ENCODE measurements at regions of chr7 and their contacts with region 1.

Region 1: DNA sequence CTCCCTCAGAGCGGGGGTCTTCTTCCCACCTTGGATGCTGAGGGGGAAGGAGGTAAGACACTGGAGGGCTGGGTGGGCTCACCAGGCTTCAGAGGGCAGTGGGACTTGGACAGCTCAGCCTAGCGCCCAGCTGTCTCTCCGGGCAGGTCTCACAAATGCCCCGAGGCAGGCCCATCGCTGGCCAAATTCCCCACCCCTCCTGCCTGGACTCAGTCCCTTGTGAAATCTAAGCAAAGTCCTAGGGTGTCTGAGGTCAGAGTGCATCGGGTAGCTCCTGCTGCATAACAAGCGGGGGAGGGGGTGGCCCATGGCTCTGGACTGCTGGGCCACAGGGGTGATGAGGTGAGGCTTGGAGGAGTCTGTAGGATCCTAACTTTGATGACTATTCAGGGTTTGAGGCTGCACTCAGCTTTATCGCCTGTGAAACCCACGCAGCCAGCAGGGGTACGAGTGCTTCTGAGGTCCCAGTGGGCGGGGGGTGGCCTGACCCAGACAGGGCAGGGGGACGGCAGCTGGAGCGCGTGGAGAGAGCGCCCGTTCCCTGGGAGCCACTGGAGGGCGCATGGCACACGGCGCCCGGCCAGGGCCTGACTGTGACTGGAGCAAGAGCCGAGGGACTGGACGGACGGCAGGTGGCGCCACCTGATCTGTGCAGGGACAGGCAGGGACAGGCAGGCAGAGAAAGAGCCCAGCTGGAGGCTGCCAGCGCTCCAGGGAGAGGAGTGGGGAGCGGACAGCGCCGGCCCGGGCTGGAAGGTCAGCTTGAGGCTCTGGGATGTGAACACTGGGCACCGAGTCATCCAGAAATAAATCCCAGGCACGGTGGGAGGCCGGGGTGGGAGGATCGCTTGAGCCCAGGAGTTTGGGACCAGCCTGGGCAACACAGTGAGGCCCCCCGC is 10.0 kb downstream of the CYP2W1 start:
- DNase-seq: peak; percentile 98
- H3K4me3 ChIP-seq: peak overlapping the region in 1 of 2 experiments; percentile 24; a peak in 1 of 4 replicates
- H3K27ac ChIP-seq: no peak overlapping the region
- H3K4me1 ChIP-seq: peaks cover 3 to 7% of the 10 kb centered on the region in 2 experiments; a peak in 2 of 4 replicates
- H3K27me3 ChIP-seq: no peaks in the 10 kb centered on the region
- CTCF ChIP-seq: peak; percentile 100
- EP300 ChIP-seq: 0 out of 4 replicates have a peak, but pooled peaks of 1 of the 2 experiments have one; percentile 17
- RAD21 ChIP-seq: peak; percentile 100

Region 2: GRCh38 chr7:851204-851603 is 141.8 kb before region 1 on chr7:
- CTCF ChIA-PET with region 1: no interaction called
- POLR2A ChIA-PET with region 1: no interaction called
- DNase-seq: no peak
- H3K4me3 ChIP-seq: no peak overlapping the region
- H3K27ac ChIP-seq: no peak overlapping the region
- H3K4me1 ChIP-seq: no peaks in the 10 kb centered on the region
- H3K27me3 ChIP-seq: no peaks in the 10 kb centered on the region
- CTCF ChIP-seq: no peak
- EP300 ChIP-seq: no peak
- RAD21 ChIP-seq: no peak

Region 3: GRCh38 chr7:974820-975681 is 17.9 kb before region 1 on chr7 and contains the start of gene COX19:
- CTCF ChIA-PET with region 1: interaction called, 134 read pairs
- POLR2A ChIA-PET with region 1: no interaction called
- DNase-seq: peak; percentile 100
- H3K4me3 ChIP-seq: peak within 1 kb of the TSS; percentile 75 to 83
- H3K27ac ChIP-seq: peak within 1 kb of the TSS; percentile 79 to 91
- H3K4me1 ChIP-seq: peaks cover 6 to 12% of the 10 kb centered on the region in 2 experiments; a peak in 2 of 4 replicates
- H3K27me3 ChIP-seq: no peaks in the 10 kb centered on the region
- CTCF ChIP-seq: no peak
- EP300 ChIP-seq: no peak
- RAD21 ChIP-seq: no peak
- polyA plus RNA-seq, gene COX19: 7.6 TPM in 2 replicates

Region 4: DNA sequence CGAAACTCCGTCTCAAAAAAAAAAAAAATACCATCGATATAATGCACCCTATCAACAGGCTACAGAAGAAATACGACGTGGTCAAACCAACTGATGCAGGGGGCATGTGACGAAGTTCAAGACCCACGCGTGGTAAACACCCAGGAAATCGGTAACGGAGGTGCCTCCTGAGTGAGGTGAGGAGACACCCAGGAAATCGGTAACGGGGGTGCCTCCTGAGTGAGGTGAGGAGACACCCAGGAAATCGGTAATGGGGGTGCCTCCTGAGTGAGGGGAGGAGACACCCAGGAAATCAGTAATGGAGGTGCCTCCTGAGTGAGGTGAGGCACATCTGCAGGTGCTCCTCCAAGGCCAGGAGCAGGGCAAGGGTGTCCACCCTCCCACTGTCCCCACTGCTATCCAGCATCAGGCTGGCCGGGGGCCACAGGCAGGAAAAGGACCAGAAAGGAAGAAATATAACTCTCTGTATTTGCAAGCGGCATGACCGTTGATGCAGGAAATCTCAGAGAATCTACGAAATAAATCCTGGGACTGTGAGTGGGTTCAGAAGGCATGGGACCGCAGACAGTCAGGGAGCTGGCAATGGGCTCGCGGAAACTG is 40.7 kb after region 1 on chr7:
- CTCF ChIA-PET with region 1: interaction called, 101 read pairs
- POLR2A ChIA-PET with region 1: no interaction called
- DNase-seq: no peak
- H3K4me3 ChIP-seq: no peak overlapping the region
- H3K27ac ChIP-seq: no peak overlapping the region
- H3K4me1 ChIP-seq: peaks cover 6 to 8% of the 10 kb centered on the region in 2 experiments; a peak in 3 of 4 replicates
- H3K27me3 ChIP-seq: no peaks in the 10 kb centered on the region
- CTCF ChIP-seq: no peak
- EP300 ChIP-seq: no peak
- RAD21 ChIP-seq: no peak

Region 5: GRCh38 chr7:1096156-1097119 is 103.5 kb after region 1 on chr7:
- CTCF ChIA-PET with region 1: interaction called, 114 read pairs
- POLR2A ChIA-PET with region 1: no interaction called
- DNase-seq: peak; percentile 88
- H3K4me3 ChIP-seq: no peak overlapping the region; a peak in 1 of 4 replicates
- H3K27ac ChIP-seq: peak overlapping the region in 1 of 2 experiments; percentile 71; a peak in 2 of 4 replicates
- H3K4me1 ChIP-seq: peaks cover 12 to 44% of the 10 kb centered on the region in 2 experiments; a peak in 3 of 4 replicates
- H3K27me3 ChIP-seq: no peaks in the 10 kb centered on the region
- CTCF ChIP-seq: no peak
- EP300 ChIP-seq: no peak
- RAD21 ChIP-seq: no peak

Region 6: DNA sequence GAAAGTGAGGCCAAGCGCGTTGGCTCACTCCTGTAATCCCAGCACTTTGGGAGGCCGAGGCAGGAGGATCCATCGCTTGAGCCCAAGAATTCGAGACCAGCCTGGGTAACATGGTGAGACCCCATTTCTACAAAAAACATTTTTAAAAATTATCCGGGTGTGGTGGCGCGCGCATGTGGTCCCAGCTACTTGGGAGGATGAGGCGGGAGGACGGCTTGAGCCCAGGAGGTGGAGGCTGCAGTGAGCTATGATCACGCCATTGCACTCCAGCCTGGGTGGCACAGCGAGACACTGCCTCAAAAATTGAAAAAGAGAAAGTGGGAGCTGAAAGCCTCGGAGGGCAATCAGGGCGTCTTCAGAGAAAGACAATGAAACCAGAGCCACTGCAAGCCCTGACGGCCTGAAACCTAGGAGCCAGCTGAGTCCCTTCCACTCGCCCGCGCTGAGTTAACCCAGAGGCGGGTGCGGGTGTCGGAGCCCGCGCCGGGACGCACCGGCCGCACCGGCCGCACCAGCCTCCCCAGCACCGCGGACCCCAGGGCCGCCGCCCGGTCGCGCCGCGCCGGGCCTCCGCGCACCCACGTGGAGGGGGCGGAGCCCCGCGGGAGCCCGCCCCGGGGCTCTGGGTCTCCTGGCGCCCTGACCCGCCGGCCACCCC is 144.7 kb after region 1 on chr7:
- CTCF ChIA-PET with region 1: interaction called, 327 read pairs
- POLR2A ChIA-PET with region 1: interaction called, 8 read pairs
- DNase-seq: no peak
- H3K4me3 ChIP-seq: peak overlapping the region; percentile 68 to 90
- H3K27ac ChIP-seq: peak overlapping the region; percentile 1 to 70; a peak in 2 of 4 replicates
- H3K4me1 ChIP-seq: peaks cover 4 to 19% of the 10 kb centered on the region in 2 experiments; a peak in 2 of 4 replicates
- H3K27me3 ChIP-seq: no peaks in the 10 kb centered on the region
- CTCF ChIP-seq: no peak
- EP300 ChIP-seq: no peak
- RAD21 ChIP-seq: no peak

Region 7: DNA sequence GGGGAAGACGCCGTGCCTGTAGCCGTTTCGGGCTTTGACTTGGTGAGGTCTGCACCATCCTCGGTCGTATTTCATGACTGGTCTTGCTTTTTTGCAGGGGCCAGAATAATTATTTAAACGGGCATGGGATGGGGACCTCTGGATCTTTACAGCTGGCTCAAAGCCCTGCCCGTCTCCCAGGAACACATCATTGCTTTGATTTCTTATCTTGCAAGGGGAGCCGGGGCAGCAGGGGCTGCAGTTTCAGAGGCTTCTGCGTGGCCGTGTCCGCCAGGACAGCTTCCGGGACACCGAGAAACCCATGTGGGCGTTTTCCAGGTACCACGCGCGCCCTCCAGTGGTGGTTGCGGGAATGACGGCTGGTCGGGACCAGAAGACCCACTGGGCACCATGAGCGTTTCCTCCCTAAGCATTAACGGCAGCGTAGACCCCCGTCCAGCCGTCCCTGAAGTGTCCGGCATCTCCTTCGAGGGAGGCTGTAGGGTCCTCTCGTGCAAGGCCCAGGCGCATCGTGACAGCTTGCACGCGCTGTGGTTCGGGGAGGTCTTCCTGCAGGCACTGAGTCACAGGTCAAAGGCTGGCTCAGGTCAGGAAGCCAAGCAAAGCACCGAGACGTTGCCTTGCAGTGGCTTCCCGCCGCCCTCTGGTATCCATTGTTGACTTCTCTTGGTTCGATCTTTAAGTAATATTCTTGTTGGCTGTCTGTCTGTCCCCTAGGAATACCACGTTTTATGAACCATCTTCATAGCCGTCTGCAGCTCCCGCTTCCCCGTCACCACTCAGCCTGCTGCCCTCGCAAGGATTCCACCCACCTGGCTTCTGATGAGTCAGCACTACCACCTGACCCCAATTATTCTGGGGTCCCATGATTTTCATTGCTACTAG is 183.3 kb after region 1 on chr7:
- CTCF ChIA-PET with region 1: interaction called, 64 read pairs
- POLR2A ChIA-PET with region 1: no interaction called
- DNase-seq: peak; percentile 93
- H3K4me3 ChIP-seq: peak overlapping the region; percentile 4 to 36; a peak in 2 of 4 replicates
- H3K27ac ChIP-seq: no peak overlapping the region
- H3K4me1 ChIP-seq: peaks cover 0 to 2% of the 10 kb centered on the region in 2 experiments; a peak in 1 of 4 replicates
- H3K27me3 ChIP-seq: no peaks in the 10 kb centered on the region
- CTCF ChIP-seq: peak; percentile 91
- EP300 ChIP-seq: no peak
- RAD21 ChIP-seq: peak; percentile 74

Region 8: DNA sequence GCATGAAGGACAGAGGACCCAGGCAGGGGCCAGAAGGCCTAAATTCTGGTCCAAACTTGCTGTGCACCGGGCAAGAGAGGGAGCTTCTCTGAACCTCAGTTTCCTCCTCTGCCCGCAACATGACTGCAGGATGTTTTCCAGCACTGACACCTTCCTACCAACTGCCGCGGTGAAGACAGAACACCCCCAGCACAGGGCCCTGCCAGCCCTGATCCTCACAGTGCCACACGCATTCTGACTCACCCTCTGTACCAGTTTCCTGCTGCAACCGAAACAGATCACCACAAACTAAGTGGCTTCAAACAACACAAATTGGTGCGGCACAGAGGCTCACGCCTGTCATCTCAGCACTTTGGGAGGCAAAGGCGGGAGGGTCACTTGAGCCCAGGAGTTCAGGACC is 1221.7 kb after region 1 on chr7:
- CTCF ChIA-PET with region 1: no interaction called
- POLR2A ChIA-PET with region 1: no interaction called
- DNase-seq: no peak
- H3K4me3 ChIP-seq: no peak overlapping the region
- H3K27ac ChIP-seq: no peak overlapping the region
- H3K4me1 ChIP-seq: peaks cover 0 to under 1% of the 10 kb centered on the region in 2 experiments; a peak in 1 of 4 replicates
- H3K27me3 ChIP-seq: no peaks in the 10 kb centered on the region
- CTCF ChIP-seq: no peak
- EP300 ChIP-seq: no peak
- RAD21 ChIP-seq: no peak

Measured in SK-N-SH (cell line).